ENCODE measurements at regions of chr14 and their contacts with region 1.

Region 1: GRCh38 chr14:35416108-35416750 is 11.7 kb upstream of the NFKBIA start:
- DNase-seq: peak; percentile 75
- ATAC-seq: peak; percentile 75
- H3K4me3 ChIP-seq: no peak overlapping the region; the same call in 1 of the 2 replicates
- H3K27ac ChIP-seq: peak overlapping the region; percentile 62
- H3K4me1 ChIP-seq: peaks cover 31% of the 10 kb centered on the region
- H3K27me3 ChIP-seq: no peaks in the 10 kb centered on the region
- CTCF ChIP-seq: no peak
- EP300 ChIP-seq: peak; percentile 65 to 67; a peak in 2 of 4 replicates
- POLR2A ChIP-seq: no peak
- RAD21 ChIP-seq: no peak

Region 2: GRCh38 chr14:34671716-34672115 is 744.5 kb before region 1 on chr14:
- CTCF ChIA-PET with region 1: interaction called, 7 read pairs
- POLR2A ChIA-PET with region 1: no interaction called
- RAD21 ChIA-PET with region 1: interaction called, 4 read pairs
- SMC1A ChIA-PET with region 1: interaction called, 8 read pairs
- in situ Hi-C with region 1: loop called (anchors 5 kb)
- intact Hi-C with region 1: loop called (anchors 5 kb)
- DNase-seq: no peak
- ATAC-seq: no peak
- H3K4me3 ChIP-seq: no peak overlapping the region
- H3K27ac ChIP-seq: no peak overlapping the region
- H3K4me1 ChIP-seq: no peaks in the 10 kb centered on the region
- H3K27me3 ChIP-seq: no peaks in the 10 kb centered on the region
- CTCF ChIP-seq: no peak
- EP300 ChIP-seq: no peak
- POLR2A ChIP-seq: no peak
- RAD21 ChIP-seq: no peak

Region 3: DNA sequence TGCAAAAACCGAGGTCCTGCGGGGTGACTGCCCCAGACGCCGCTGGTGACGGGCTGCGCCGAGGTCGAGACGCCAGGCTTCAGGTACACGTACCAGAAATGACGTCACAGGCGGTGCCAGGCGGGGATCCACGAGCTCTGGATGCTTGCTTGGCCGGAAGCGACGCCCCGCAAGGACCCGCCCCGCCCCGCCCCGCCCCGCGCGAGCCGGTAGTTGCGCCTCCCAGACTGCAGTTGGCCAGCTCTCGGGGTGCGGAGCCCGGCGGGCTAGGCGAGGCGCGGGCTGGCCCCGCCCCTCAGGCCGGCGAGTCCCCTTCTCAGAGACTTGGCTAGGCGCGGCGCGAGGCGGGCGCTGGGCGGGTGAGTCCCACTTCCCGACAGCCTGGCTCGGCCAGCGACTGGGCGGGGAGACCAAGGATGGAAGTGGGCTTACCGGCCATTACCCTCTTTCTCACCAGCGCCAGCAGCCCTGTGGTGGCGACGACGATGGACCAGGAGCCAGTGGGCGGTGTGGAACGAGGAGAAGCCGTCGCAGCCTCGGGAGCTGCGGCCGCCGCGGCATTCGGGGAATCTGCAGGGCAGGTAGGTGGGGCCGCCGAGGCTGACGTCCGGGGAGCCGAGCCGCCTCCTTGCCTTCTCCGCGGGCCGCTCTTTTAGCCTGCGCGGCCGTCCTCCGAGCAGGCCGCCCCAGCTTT is 370.0 kb before region 1 on chr14 and contains the start of gene FAM177A1:
- CTCF ChIA-PET with region 1: interaction called, 4 read pairs
- POLR2A ChIA-PET with region 1: interaction called, 4 read pairs
- RAD21 ChIA-PET with region 1: interaction called, 5 read pairs
- SMC1A ChIA-PET with region 1: interaction called, 4 read pairs
- in situ Hi-C with region 1: loop called (anchors 10 kb)
- intact Hi-C with region 1: loop called (anchors 5 kb)
- DNase-seq: peak; percentile 78
- ATAC-seq: peak; percentile 98
- H3K4me3 ChIP-seq: peak within 1 kb of the TSS; percentile 87
- H3K27ac ChIP-seq: peak within 1 kb of the TSS; percentile 67
- H3K4me1 ChIP-seq: peaks cover 6% of the 10 kb centered on the region; the same call in 1 of the 2 replicates
- H3K27me3 ChIP-seq: no peaks in the 10 kb centered on the region
- CTCF ChIP-seq: no peak
- EP300 ChIP-seq: no peak
- POLR2A ChIP-seq: peak; percentile 95
- RAD21 ChIP-seq: no peak
- polyA plus RNA-seq, gene FAM177A1: 5.3 to 11.0 TPM

Region 4: GRCh38 chr14:35159742-35160409 is 256.4 kb before region 1 on chr14:
- CTCF ChIA-PET with region 1: interaction called, 10 read pairs
- POLR2A ChIA-PET with region 1: interaction called, 4 read pairs
- RAD21 ChIA-PET with region 1: interaction called, 5 read pairs
- SMC1A ChIA-PET with region 1: interaction called, 14 read pairs
- in situ Hi-C with region 1: no loop called
- intact Hi-C with region 1: no loop called
- DNase-seq: no peak
- ATAC-seq: peak; percentile 64
- H3K4me3 ChIP-seq: no peak overlapping the region
- H3K27ac ChIP-seq: peak overlapping the region; percentile 45; the same call in 1 of the 2 replicates
- H3K4me1 ChIP-seq: peaks cover 19% of the 10 kb centered on the region
- H3K27me3 ChIP-seq: no peaks in the 10 kb centered on the region
- CTCF ChIP-seq: no peak
- EP300 ChIP-seq: peak in 1 of 2 experiments; percentile 14; a peak in 1 of 4 replicates
- POLR2A ChIP-seq: no peak
- RAD21 ChIP-seq: no peak

Region 5: DNA sequence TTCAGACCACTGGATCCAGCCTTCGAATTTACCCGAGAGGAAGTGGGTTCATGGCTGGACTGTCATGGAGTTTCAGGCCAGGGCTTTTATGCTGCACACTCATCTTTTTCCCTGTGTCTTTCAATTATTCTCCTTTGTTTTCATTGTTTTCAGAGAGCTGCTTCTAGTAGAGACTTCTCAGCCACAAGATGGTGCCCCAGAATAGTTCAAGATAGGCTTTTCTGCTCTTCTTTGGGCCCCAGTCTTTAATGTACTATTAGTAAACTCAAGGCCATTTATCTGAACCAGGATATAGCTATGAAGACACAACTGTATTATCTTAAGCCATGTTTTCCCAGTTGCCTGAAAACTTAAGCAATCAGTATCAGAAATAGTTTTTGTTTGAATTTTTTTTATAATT is 154.5 kb before region 1 on chr14:
- CTCF ChIA-PET with region 1: interaction called, 11 read pairs
- POLR2A ChIA-PET with region 1: no interaction called
- RAD21 ChIA-PET with region 1: interaction called, 3 read pairs
- SMC1A ChIA-PET with region 1: interaction called, 9 read pairs
- in situ Hi-C with region 1: no loop called
- intact Hi-C with region 1: no loop called
- DNase-seq: no peak
- ATAC-seq: peak; percentile 36; the same call in 2 of the 3 replicates
- H3K4me3 ChIP-seq: no peak overlapping the region
- H3K27ac ChIP-seq: no peak overlapping the region
- H3K4me1 ChIP-seq: no peaks in the 10 kb centered on the region
- H3K27me3 ChIP-seq: no peaks in the 10 kb centered on the region
- CTCF ChIP-seq: peak in 1 of 3 experiments; percentile 30; a peak in 1 of 6 replicates
- EP300 ChIP-seq: no peak
- POLR2A ChIP-seq: no peak
- RAD21 ChIP-seq: peak; percentile 50

Region 6: GRCh38 chr14:35404449-35405303 is 11.6 kb before region 1 on chr14 and contains the start of gene NFKBIA:
- CTCF ChIA-PET with region 1: interaction called, 114 read pairs
- POLR2A ChIA-PET with region 1: interaction called, 70 read pairs
- RAD21 ChIA-PET with region 1: interaction called, 133 read pairs
- SMC1A ChIA-PET with region 1: interaction called, 108 read pairs
- in situ Hi-C with region 1: no loop called
- intact Hi-C with region 1: no loop called
- DNase-seq: peak; percentile 86
- ATAC-seq: peak; percentile 63
- H3K4me3 ChIP-seq: peak within 1 kb of the TSS; percentile 98
- H3K27ac ChIP-seq: peak within 1 kb of the TSS; percentile 89
- H3K4me1 ChIP-seq: peaks cover 14% of the 10 kb centered on the region
- H3K27me3 ChIP-seq: no peaks in the 10 kb centered on the region
- CTCF ChIP-seq: peak; percentile 35 to 39 (median 39); a peak in 3 of 6 replicates
- EP300 ChIP-seq: peak; percentile 78 to 83; a peak in 2 of 4 replicates
- POLR2A ChIP-seq: peak; percentile 95
- RAD21 ChIP-seq: peak; percentile 25; the same call in 1 of the 2 replicates
- polyA plus RNA-seq, gene NFKBIA: 123 to 159 TPM